ENCODE measurements at regions of chr1 and their contacts with region 1.

Region 1: DNA sequence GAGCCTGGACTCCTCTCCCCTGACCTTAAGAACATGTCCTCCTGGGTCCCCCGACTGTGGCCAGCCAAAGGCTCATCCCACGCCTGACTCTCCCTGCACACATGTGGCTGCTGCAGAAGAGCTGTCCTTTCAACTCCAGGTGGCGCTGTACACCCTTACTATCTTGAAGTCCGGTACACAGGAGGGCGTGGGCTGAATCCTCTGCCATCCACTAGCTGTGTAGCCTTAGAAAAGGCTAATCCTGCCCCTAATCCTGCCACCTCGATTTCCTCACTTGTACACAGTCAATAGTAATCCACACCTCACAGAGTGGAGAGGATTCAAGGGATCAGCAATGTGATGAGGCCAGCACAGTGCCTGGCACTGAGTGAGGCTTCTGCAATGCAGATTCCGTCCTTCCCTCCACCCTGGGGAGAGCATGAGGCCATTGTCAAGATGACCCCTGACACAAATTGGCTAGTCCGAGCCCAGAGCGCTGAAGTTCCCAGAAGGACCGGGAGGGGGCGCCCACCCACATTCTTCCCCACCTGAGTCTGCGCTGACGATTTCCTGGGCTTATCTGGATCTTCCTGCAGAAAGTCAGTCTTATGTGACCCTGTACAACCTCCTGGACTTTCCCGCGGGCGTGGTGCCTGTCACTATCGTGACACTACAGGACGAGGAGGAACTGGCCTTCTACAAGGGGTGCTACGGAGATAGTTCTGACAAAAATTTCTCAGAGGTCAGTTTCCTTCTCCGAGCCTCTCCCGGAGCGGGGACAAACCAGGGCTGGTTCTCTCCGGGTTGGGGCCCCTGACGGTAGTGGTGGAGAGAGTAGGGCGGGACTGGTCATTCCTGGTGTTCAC is 47.1 kb upstream of the DMBX1 start:
- DNase-seq: peak; percentile 39 to 82 (median 72)
- ATAC-seq: peak; percentile 74
- H3K4me3 ChIP-seq: peak overlapping the region; percentile 49 to 58
- H3K4me3 Mint-ChIP-seq: peak overlapping the region; percentile 89
- H3K27ac ChIP-seq: no peak overlapping the region
- H3K27ac Mint-ChIP-seq: no peak overlapping the region
- H3K4me1 ChIP-seq: peaks cover 6% of the 10 kb centered on the region
- H3K4me1 Mint-ChIP-seq: peaks cover 14% of the 10 kb centered on the region
- H3K27me3 ChIP-seq: peaks cover 1 to 3% of the 10 kb centered on the region in 2 experiments
- H3K27me3 Mint-ChIP-seq: peaks cover 16% of the 10 kb centered on the region
- CTCF ChIP-seq: peak; percentile 95

Region 2: DNA sequence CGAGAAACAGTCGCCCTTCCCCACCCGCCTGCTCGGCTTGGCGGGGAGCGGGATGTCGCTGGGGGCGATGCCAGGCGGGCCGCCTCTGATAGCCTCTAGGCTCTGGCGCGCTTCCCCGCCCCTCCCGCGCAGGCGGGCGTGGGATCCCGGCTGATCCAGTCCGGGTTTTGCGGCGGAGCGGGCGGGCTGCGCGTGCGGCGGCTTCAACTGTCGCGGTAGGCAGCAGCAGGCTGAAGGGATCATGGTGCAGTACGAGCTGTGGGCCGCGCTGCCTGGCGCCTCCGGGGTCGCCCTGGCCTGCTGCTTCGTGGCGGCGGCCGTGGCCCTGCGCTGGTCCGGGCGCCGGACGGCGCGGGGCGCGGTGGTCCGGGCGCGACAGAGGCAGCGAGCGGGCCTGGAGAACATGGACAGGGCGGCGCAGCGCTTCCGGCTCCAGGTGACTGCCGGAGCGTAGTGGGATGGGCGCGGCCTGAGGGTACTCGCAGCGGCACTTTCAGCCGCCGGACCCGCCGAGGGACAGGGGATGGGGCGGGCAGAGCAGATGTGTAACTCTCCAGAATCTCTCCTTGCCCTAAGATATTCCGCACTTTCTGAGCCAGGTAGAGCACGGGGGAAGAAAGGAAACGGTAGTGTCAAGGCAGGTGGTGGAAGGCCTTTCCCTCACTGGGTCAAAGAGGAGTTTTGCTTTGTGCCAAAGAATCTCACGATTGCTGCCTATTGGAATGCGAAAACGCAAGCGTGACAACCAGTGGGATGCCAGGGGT is 48.2 kb before region 1 on chr1 and contains the start of gene FAAH:
- CTCF ChIA-PET with region 1: no interaction called
- POLR2A ChIA-PET with region 1: no interaction called
- intact Hi-C with region 1: no loop called
- DNase-seq: peak in 6 of 9 experiments; percentile 24 to 70 (median 44)
- ATAC-seq: peak; percentile 80
- H3K4me3 ChIP-seq: peak within 1 kb of the TSS; percentile 29 to 51
- H3K4me3 Mint-ChIP-seq: peak within 1 kb of the TSS; percentile 76
- H3K27ac ChIP-seq: no peak within 1 kb of the TSS
- H3K27ac Mint-ChIP-seq: no peak within 1 kb of the TSS
- H3K4me1 ChIP-seq: no peaks in the 10 kb centered on the region
- H3K4me1 Mint-ChIP-seq: peaks cover 11% of the 10 kb centered on the region
- H3K27me3 ChIP-seq: peaks cover 0 to 2% of the 10 kb centered on the region in 2 experiments
- H3K27me3 Mint-ChIP-seq: peaks cover 22% of the 10 kb centered on the region
- CTCF ChIP-seq: no peak
- total RNA-seq, gene FAAH: 6.1 to 6.5 TPM

Region 3: DNA sequence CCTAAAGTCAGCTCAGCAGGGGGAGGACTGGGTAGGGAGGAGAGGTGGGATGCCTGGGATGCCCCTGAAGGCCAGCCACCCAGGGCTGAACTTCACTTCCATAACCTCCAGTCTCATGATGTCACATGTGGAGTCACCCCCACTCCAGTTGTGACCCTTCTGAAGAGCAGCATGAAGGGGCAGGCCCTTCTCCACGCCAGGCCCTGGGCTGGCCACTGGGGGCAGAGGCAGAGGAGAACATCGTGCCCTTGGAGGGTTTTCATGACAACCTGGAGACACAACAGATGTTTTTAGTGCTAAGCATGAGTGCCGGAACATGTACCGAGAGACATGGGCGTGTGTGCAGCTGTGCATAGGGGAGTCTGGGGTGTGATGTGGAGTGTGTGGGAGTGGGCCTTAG is 10.8 kb before region 1 on chr1:
- CTCF ChIA-PET with region 1: interaction called, 25 read pairs
- POLR2A ChIA-PET with region 1: no interaction called
- intact Hi-C with region 1: no loop called
- DNase-seq: no peak
- ATAC-seq: no peak
- H3K4me3 ChIP-seq: no peak overlapping the region
- H3K4me3 Mint-ChIP-seq: no peak overlapping the region
- H3K27ac ChIP-seq: no peak overlapping the region
- H3K27ac Mint-ChIP-seq: no peak overlapping the region
- H3K4me1 ChIP-seq: no peaks in the 10 kb centered on the region
- H3K4me1 Mint-ChIP-seq: no peaks in the 10 kb centered on the region
- H3K27me3 ChIP-seq: no peaks in the 10 kb centered on the region
- H3K27me3 Mint-ChIP-seq: peaks cover 13% of the 10 kb centered on the region
- CTCF ChIP-seq: no peak

Region 4: GRCh38 chr1:46456411-46456963 is 13.9 kb after region 1 on chr1:
- CTCF ChIA-PET with region 1: interaction called, 12 read pairs
- POLR2A ChIA-PET with region 1: no interaction called
- intact Hi-C with region 1: no loop called
- DNase-seq: no peak
- ATAC-seq: no peak
- H3K4me3 ChIP-seq: no peak overlapping the region
- H3K4me3 Mint-ChIP-seq: no peak overlapping the region
- H3K27ac ChIP-seq: no peak overlapping the region
- H3K27ac Mint-ChIP-seq: no peak overlapping the region
- H3K4me1 ChIP-seq: no peaks in the 10 kb centered on the region
- H3K4me1 Mint-ChIP-seq: no peaks in the 10 kb centered on the region
- H3K27me3 ChIP-seq: no peaks in the 10 kb centered on the region
- H3K27me3 Mint-ChIP-seq: peaks cover 42% of the 10 kb centered on the region
- CTCF ChIP-seq: no peak

Region 5: GRCh38 chr1:46508757-46509156 is 66.2 kb after region 1 on chr1:
- CTCF ChIA-PET with region 1: no interaction called
- POLR2A ChIA-PET with region 1: no interaction called
- intact Hi-C with region 1: no loop called
- DNase-seq: no peak
- ATAC-seq: no peak
- H3K4me3 ChIP-seq: no peak overlapping the region
- H3K4me3 Mint-ChIP-seq: no peak overlapping the region
- H3K27ac ChIP-seq: no peak overlapping the region
- H3K27ac Mint-ChIP-seq: no peak overlapping the region
- H3K4me1 ChIP-seq: no peaks in the 10 kb centered on the region
- H3K4me1 Mint-ChIP-seq: no peaks in the 10 kb centered on the region
- H3K27me3 ChIP-seq: no peaks in the 10 kb centered on the region
- H3K27me3 Mint-ChIP-seq: peaks cover 20% of the 10 kb centered on the region
- CTCF ChIP-seq: no peak

Region 6: GRCh38 chr1:46547481-46548383 is 105.2 kb after region 1 on chr1:
- CTCF ChIA-PET with region 1: no interaction called
- POLR2A ChIA-PET with region 1: no interaction called
- intact Hi-C with region 1: loop called in 1 of 2 experiments (anchors 5 kb)
- DNase-seq: peak in 2 of 9 experiments; percentile 51 to 67
- ATAC-seq: no peak
- H3K4me3 ChIP-seq: no peak overlapping the region
- H3K4me3 Mint-ChIP-seq: no peak overlapping the region
- H3K27ac ChIP-seq: no peak overlapping the region
- H3K27ac Mint-ChIP-seq: no peak overlapping the region
- H3K4me1 ChIP-seq: peaks cover 13% of the 10 kb centered on the region
- H3K4me1 Mint-ChIP-seq: peaks cover 15% of the 10 kb centered on the region
- H3K27me3 ChIP-seq: peaks cover 9 to 15% of the 10 kb centered on the region in 2 experiments
- H3K27me3 Mint-ChIP-seq: peaks cover 41% of the 10 kb centered on the region
- CTCF ChIP-seq: peak; percentile 33

Region 7: DNA sequence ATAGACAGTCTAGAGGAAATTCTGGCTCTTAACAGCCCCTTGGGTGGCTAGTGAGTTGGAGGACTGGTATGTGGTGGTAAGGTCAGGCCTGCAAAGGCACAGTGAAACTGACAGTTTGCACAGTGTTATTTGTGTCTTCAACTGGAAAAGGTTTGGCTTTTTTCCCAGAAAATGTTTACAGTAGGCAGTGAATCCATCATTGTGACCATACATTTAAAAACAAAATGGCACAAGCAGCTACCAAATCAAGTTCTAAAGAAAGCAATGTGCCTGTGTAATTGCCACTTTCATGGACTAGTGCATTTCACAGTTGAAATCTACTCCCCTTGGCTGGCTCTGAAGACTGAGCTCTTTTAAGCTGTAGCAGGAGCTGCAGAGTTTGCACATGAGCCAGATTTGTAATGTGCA is 200.8 kb after region 1 on chr1:
- CTCF ChIA-PET with region 1: no interaction called
- POLR2A ChIA-PET with region 1: no interaction called
- intact Hi-C with region 1: no loop called
- DNase-seq: no peak
- ATAC-seq: no peak
- H3K4me3 ChIP-seq: no peak overlapping the region
- H3K4me3 Mint-ChIP-seq: no peak overlapping the region
- H3K27ac ChIP-seq: no peak overlapping the region
- H3K27ac Mint-ChIP-seq: no peak overlapping the region
- H3K4me1 ChIP-seq: no peaks in the 10 kb centered on the region
- H3K4me1 Mint-ChIP-seq: no peaks in the 10 kb centered on the region
- H3K27me3 ChIP-seq: no peaks in the 10 kb centered on the region
- H3K27me3 Mint-ChIP-seq: no peaks in the 10 kb centered on the region
- CTCF ChIP-seq: no peak

Region 8: DNA sequence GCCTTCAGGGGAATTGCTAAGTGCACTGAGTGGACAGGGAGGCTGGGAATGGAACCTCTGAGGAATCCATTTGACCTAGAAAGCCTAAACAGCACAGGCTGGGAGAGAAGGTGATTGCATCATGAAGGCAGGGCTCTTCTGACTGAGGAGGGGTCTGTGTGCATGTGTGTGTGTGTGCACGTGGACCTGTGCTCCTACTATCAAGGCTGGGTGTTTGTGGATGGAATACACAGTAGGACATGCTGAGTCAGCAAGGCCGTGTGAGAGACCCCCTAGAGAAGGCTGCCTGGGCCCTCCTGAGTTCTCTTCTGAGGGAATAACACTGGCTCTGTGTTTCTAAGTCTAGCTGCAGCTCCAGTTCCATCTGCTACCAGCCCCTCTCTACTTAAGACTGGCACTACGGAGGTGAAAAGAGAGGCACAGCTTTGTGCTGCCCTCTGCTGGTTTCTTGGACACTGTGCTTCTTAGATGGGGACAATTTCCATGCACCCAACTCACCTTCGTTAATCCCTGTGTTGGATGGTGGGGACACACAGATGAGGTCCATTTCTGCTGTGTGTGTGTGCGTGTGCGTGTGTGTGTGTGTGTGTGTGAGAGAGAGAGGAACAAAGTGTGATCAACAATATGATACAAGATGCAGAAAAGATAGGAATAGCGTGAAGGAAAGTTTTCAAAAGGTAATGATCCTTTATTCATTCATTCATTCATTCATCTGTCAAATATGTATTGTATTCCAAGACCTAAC is 282.6 kb after region 1 on chr1:
- CTCF ChIA-PET with region 1: interaction called, 3 read pairs
- POLR2A ChIA-PET with region 1: no interaction called
- intact Hi-C with region 1: loop called (anchors 1 kb)
- DNase-seq: peak; percentile 42 to 86 (median 69)
- ATAC-seq: peak; percentile 100
- H3K4me3 ChIP-seq: no peak overlapping the region
- H3K4me3 Mint-ChIP-seq: no peak overlapping the region
- H3K27ac ChIP-seq: no peak overlapping the region
- H3K27ac Mint-ChIP-seq: no peak overlapping the region
- H3K4me1 ChIP-seq: no peaks in the 10 kb centered on the region
- H3K4me1 Mint-ChIP-seq: peaks cover 2% of the 10 kb centered on the region
- H3K27me3 ChIP-seq: no peaks in the 10 kb centered on the region
- H3K27me3 Mint-ChIP-seq: peaks cover 36% of the 10 kb centered on the region
- CTCF ChIP-seq: peak; percentile 60

Region 9: DNA sequence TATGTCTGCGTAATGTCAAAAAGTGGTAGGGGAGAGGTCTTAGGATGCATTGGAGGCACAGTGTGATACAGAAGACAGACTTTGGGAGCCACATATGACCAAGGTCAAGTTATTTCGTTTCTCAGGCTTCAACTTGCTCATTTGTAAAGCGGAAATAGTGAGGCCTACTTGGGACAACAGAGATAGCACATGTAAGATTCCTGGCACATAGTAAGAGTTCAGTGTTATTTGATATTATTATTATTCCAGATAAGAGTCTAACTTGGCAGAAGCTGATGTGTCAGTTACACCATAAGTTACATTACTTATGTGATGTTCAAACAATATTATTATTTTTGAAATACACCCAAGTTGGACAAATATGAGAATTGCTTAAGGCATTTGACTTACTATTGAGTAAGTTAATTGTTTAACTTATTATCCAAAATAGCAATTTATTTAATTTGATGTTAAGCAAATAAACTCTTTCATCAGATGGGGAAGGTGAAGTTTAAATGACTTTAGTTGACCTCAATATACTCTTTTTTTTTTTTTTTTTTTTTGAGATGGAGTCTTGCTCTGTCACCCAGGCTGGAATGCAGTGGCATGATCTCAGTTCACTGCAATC is 570.8 kb after region 1 on chr1:
- CTCF ChIA-PET with region 1: no interaction called
- POLR2A ChIA-PET with region 1: no interaction called
- intact Hi-C with region 1: no loop called
- DNase-seq: no peak
- ATAC-seq: no peak
- H3K4me3 ChIP-seq: no peak overlapping the region
- H3K4me3 Mint-ChIP-seq: no peak overlapping the region
- H3K27ac ChIP-seq: no peak overlapping the region
- H3K27ac Mint-ChIP-seq: no peak overlapping the region
- H3K4me1 ChIP-seq: no peaks in the 10 kb centered on the region
- H3K4me1 Mint-ChIP-seq: no peaks in the 10 kb centered on the region
- H3K27me3 ChIP-seq: no peaks in the 10 kb centered on the region
- H3K27me3 Mint-ChIP-seq: peaks cover 7% of the 10 kb centered on the region
- CTCF ChIP-seq: no peak

Region 10: GRCh38 chr1:47179017-47179987 is 736.8 kb after region 1 on chr1:
- CTCF ChIA-PET with region 1: no interaction called
- POLR2A ChIA-PET with region 1: no interaction called
- intact Hi-C with region 1: loop called in 1 of 2 experiments (anchors 10 kb)
- DNase-seq: peak; percentile 33 to 75 (median 59)
- ATAC-seq: peak; percentile 69
- H3K4me3 ChIP-seq: peak overlapping the region; percentile 18 to 34
- H3K4me3 Mint-ChIP-seq: peak overlapping the region; percentile 72
- H3K27ac ChIP-seq: no peak overlapping the region
- H3K27ac Mint-ChIP-seq: no peak overlapping the region
- H3K4me1 ChIP-seq: peaks cover 7% of the 10 kb centered on the region
- H3K4me1 Mint-ChIP-seq: peaks cover 14% of the 10 kb centered on the region
- H3K27me3 ChIP-seq: peaks cover 0 to 10% of the 10 kb centered on the region in 2 experiments
- H3K27me3 Mint-ChIP-seq: peaks cover 33% of the 10 kb centered on the region
- CTCF ChIP-seq: peak; percentile 79